ENCODE measurements at regions of chr1 and their contacts with region 1.

Region 1: DNA sequence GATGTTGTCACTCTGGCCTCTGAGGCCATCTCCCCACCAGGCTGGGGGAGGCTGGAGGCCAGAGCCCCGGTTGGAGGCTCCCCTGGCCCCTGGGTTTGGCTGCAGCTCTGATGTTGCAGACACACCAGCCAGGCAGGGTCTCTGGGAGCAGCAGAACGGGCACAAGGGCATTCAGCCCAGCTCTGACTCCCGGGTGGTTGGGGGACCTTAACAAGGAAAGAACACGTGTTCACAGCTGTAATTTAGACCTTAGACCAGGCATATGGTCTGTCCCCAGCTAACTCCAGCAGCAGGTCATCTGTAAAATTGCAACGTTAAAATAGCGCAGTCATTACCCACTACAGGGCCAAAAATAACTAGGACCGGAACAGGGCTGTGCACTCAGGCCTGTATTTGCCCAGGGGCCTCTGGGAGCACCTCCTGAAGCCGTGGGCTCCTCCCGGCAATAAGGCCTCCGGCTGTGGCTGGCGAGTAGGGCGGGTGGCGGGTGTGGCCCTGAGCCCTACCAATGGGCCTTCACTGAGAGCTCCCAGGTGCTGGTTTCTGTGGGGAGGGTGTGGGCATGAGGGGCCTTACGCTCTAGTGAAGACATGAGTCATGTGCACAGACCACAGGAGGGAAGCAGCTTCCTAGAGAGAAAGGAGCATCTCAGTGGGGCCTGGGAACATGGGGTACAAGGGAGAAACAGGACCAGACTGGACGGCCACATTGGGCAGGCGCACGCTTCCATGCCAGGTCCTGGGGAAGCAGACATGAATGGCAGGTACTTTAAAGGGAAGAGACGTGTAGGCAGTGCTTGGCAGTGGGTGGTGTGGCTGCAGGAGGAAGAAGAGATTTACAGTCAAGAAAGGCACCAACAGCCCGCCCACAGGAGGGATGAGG is 6.1 kb downstream of the LDLRAP1 start:
- DNase-seq: peak; percentile 86 to 95 (median 92)
- H3K4me3 ChIP-seq: peak overlapping the region in 3 of 7 experiments; percentile 20 to 37 (median 23)
- H3K27ac ChIP-seq: peak overlapping the region; percentile 54 to 74
- H3K4me1 ChIP-seq: peaks cover 3 to 83% (median 50%) of the 10 kb centered on the region in 4 experiments
- H3K27me3 ChIP-seq: no peaks in the 10 kb centered on the region

Region 2: DNA sequence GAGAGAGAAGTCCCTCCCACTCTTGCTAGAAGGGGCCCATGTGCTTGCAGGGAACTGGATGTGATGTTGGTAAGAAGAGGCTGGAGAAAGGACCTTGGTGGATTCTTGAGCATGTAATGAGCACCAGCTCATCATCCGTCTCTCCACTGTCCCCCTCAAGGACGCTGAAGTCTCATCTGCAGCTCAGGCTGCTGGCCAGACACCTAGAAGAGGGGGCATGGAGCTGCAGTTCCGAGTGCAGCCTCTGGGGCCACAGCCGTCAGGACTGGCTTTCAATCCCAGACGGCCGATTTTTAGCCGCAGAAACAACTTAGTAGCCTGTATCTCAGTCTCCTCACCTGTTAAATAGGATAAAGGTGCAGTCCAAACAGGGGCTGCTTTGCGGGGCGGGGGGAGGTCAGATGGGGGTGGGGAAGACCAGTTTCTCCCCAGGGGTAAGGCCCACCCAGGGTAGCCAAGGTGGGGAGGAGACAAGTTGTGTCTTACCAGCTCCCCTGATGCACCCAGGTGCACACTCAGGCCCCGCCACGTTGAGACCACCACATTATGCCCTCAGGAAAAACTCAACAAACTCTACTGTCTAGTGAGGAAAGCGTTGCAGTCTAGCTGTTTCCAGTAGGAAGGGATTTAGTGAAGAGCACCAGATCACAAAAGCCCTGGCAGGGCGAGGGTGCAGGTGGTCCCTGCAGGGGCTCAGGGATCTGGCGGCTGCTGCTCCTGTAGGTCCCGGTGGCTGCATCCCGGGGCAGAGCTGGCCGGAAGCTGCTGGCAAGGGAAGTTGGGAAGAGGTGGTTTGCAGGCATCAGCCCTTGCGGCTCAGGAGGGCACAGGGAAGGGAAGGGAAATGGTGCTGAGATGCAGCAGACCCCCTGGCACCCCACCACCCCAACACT is 23.4 kb after region 1 on chr1:
- CTCF ChIA-PET with region 1: interaction called, 15 read pairs
- POLR2A ChIA-PET with region 1: interaction called, 3 read pairs
- DNase-seq: peak; percentile 25 to 66 (median 58)
- H3K4me3 ChIP-seq: no peak overlapping the region
- H3K27ac ChIP-seq: no peak overlapping the region
- H3K4me1 ChIP-seq: peaks cover 0 to 2% (median 0%) of the 10 kb centered on the region in 4 experiments
- H3K27me3 ChIP-seq: peaks cover 0 to 1% (median 0%) of the 10 kb centered on the region in 5 experiments

Region 3: DNA sequence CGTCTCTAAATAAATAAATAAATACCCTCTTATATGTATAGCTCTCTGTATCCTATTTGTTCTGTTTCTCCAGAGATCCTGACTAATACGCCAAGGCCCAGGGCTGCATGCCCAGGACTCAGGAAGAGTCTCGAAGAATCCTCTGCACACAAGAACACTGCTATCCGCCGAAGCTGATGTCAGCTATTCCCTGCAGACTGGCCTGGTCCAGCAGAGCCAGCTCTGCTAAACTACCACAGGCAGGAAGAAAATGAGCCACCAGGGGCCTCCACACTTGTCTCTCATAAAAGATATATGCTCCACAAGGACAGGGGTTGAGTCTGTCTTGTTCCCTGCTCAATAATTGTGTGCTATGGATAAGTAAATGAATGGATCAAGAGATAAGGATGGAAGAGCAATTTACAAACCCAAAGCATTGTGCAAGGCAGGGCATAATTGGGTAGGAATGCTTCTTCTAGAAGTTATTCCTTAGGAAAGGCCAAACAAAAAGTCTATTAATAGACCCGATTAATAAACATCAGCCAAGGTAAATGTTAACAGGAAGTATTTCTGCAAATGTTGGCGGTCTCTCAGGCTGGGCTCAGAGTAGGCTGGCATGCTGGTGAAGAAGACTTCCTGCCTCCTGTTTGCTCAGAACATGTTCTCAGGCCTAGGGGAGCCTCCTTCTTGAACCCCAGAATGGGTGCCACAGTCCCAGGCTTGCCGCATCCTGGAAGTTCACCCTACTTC is 40.7 kb after region 1 on chr1:
- CTCF ChIA-PET with region 1: no interaction called
- POLR2A ChIA-PET with region 1: no interaction called
- DNase-seq: peak in 1 of 3 donors; percentile 27
- H3K4me3 ChIP-seq: no peak overlapping the region
- H3K27ac ChIP-seq: no peak overlapping the region
- H3K4me1 ChIP-seq: peaks cover 0 to 8% (median 3%) of the 10 kb centered on the region in 4 experiments
- H3K27me3 ChIP-seq: no peaks in the 10 kb centered on the region